ENCODE measurements at regions of chr16 and their contacts with region 1.

Region 1: GRCh38 chr16:12067714-12068401 is 91.3 kb downstream of the SNX29 start:
- DNase-seq: peak; percentile 81
- H3K4me3 ChIP-seq: no peak overlapping the region
- H3K27ac ChIP-seq: no peak overlapping the region
- H3K4me1 ChIP-seq: peaks cover 2% of the 10 kb centered on the region
- H3K27me3 ChIP-seq: no peaks in the 10 kb centered on the region
- CTCF ChIP-seq: peak; percentile 90

Region 2: GRCh38 chr16:11535471-11535870 is 532.4 kb before region 1 on chr16:
- CTCF ChIA-PET with region 1: no interaction called
- POLR2A ChIA-PET with region 1: no interaction called
- intact Hi-C with region 1: loop called (anchors 1 kb)
- DNase-seq: no peak
- H3K4me3 ChIP-seq: no peak overlapping the region
- H3K27ac ChIP-seq: no peak overlapping the region
- H3K4me1 ChIP-seq: no peaks in the 10 kb centered on the region
- H3K27me3 ChIP-seq: no peaks in the 10 kb centered on the region
- CTCF ChIP-seq: no peak

Region 3: DNA sequence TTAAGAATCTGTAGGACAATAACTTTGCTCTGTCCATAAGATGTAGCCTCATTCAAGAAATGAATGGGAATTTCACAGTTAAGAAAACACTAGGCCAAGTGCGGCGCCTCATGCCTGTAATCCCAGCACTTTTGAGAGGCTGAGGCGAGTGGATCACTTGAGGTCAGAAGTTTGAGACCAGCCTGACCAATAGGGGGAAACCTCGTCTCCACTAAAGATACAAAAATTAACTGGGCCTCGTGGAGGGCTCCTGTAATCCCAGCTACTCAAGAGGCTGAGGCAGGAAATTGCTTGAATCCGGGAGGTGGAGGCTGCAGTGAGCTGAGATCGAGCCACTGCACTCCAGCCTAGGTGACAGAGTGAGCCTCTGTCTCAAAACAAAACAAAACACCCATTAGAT is 196.7 kb before region 1 on chr16:
- CTCF ChIA-PET with region 1: no interaction called
- POLR2A ChIA-PET with region 1: no interaction called
- intact Hi-C with region 1: loop called (anchors 10 kb)
- DNase-seq: peak; percentile 44
- H3K4me3 ChIP-seq: no peak overlapping the region
- H3K27ac ChIP-seq: peak overlapping the region; percentile 56
- H3K4me1 ChIP-seq: peaks cover 15% of the 10 kb centered on the region
- H3K27me3 ChIP-seq: no peaks in the 10 kb centered on the region
- CTCF ChIP-seq: peak; percentile 21; the same call in 1 of the 2 replicates

Region 4: DNA sequence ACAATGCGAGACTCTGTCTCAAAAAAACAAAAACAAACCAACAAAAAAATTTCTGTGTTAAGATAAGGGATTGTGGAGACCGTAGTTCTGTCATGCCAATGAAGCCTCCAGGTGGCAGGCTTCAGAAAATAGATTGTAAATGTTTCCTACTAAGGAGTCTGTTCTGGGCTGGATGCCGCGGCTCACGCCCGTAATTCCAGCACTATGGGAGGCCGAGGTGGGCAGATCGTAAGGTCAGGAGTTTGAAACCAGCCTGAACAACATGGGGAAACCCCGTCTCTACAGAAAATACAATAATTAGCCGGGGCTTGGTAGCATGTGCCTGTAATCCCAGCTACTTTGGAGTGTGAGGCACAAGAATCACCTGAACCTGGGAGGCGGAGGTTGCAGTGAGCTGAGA is 95.7 kb before region 1 on chr16:
- CTCF ChIA-PET with region 1: interaction called, 6 read pairs
- POLR2A ChIA-PET with region 1: no interaction called
- intact Hi-C with region 1: loop called (anchors 1 kb)
- DNase-seq: peak; percentile 32
- H3K4me3 ChIP-seq: no peak overlapping the region
- H3K27ac ChIP-seq: no peak overlapping the region
- H3K4me1 ChIP-seq: no peaks in the 10 kb centered on the region
- H3K27me3 ChIP-seq: peaks cover 7% of the 10 kb centered on the region
- CTCF ChIP-seq: peak; percentile 38

Region 5: DNA sequence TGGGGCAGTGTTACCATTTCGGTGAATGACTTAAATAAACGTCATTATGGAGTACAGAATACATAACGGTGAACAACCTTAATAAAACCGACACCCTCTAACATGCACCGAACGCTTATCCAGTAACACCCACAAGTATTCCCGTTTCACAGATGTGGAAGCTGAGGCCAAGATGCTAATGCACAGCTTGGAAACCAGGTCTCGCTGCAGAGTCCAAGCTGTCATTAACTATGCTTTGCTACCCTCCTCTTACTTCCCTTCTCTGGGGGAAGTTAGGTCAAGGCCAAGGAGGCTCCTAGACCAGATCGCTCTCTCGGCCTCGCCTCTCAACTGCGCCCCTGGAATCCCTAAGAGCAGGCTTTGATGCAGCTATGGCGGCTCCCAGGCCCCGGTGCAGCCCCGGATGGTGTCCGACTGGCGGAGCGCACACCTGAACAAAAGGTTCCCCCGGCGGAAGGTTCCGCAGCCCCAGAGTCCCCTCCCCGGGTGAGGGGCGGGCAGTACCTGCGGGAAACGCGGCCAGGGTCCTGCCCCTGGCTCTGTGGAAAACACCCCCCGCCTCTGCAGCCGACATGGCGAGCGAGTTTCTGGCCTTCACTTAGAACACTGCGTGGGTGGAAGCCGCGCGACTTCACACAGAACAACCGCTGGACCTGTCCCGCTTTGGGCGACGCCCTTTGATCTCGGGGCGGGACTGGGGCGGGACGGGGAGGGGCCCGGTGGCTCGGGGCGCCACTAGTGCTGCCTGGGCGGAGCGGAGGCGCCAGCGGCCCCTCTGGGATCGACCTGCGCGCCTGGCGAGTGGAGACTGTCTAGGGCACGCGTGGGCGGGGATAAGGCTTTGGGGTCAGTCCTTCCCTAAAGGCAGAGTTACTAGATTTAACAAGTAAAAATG is 735.6 kb after region 1 on chr16 and contains the start of gene CPPED1:
- CTCF ChIA-PET with region 1: no interaction called
- POLR2A ChIA-PET with region 1: no interaction called
- intact Hi-C with region 1: no loop called
- DNase-seq: peak; percentile 43
- H3K4me3 ChIP-seq: peak within 1 kb of the TSS; percentile 25
- H3K27ac ChIP-seq: no peak within 1 kb of the TSS
- H3K4me1 ChIP-seq: no peaks in the 10 kb centered on the region
- H3K27me3 ChIP-seq: no peaks in the 10 kb centered on the region
- CTCF ChIP-seq: no peak
- total RNA-seq, gene CPPED1: 0.87 and 0.90 TPM in 2 replicates

Region 6: DNA sequence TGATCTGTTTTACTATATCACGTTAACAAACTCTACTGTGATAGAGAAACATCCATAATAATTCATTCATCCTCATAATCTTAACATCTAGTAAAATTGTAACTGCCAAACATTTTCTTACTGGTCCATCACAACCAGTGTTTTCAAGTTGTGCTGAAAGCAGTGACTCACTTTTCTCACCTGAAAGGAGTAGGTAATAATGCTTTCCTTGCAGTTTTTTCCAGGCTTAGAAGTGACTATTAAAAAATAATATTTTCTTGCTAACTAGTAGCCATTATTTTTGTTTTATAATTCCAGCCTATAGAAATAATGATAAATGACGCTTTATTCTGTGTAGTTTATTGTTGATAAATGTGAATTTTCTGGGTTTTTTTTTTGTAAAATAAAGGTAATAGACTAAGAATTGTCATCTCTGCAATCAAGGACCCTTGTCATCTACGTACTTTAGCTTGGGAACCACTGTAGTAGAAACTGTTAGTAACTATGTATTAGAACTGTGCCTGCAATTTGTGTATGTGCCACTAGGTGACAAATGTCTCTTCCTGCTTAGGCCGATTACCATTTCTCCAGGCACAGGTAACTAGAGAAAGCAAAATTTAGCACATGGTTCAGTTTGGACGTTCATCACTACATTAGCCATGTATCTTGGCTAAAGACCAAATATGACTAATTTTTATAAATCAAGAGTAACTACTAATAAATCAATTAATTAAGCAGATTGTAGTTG is 1442.7 kb after region 1 on chr16:
- CTCF ChIA-PET with region 1: no interaction called
- POLR2A ChIA-PET with region 1: no interaction called
- intact Hi-C with region 1: no loop called
- DNase-seq: no peak
- H3K4me3 ChIP-seq: no peak overlapping the region
- H3K27ac ChIP-seq: no peak overlapping the region
- H3K4me1 ChIP-seq: no peaks in the 10 kb centered on the region
- H3K27me3 ChIP-seq: no peaks in the 10 kb centered on the region
- CTCF ChIP-seq: peak; percentile 29